ENCODE measurements at regions of chr12 and their contacts with region 1.

Region 1: GRCh38 chr12:12266873-12267741 is at the start of gene LRP6:
- DNase-seq: peak; percentile 83 to 91 (median 86)
- ATAC-seq: peak; percentile 93
- H3K4me3 ChIP-seq: peak within 1 kb of the TSS; percentile 81
- H3K27ac ChIP-seq: peak within 1 kb of the TSS; percentile 97
- H3K4me1 ChIP-seq: peaks cover 0 to 5% of the 10 kb centered on the region in 2 experiments; a peak in 3 of 5 replicates
- H3K27me3 ChIP-seq: no peaks in the 10 kb centered on the region
- CTCF ChIP-seq: no peak
- EP300 ChIP-seq: no peak
- POLR2A ChIP-seq: peak; percentile 79
- RAD21 ChIP-seq: no peak
- polyA plus RNA-seq, gene LRP6: 3.0 to 10.3 TPM

Region 2: DNA sequence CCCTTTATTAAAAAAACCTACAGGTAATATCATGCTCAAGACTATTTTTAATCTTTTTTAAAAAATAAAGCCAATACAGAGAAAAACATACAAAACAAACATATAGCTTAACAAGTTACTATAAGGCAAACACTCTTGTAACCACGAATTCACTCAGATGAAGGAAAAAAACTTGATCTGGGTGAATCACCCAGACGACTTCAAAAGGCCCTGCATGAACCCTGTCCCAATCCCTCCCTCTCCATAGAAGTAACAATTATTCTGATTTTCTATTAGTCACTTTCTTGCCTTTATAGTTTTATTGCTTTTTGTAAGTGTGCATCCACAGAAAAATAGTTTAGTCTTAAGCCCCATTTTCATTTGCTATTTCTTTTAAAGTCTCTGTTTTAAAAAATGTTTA is 72.9 kb before region 1 on chr12:
- CTCF ChIA-PET with region 1: no interaction called
- POLR2A ChIA-PET with region 1: interaction called, 3 read pairs
- in situ Hi-C with region 1: no loop called
- intact Hi-C with region 1: loop called (anchors 10 kb)
- DNase-seq: peak in 1 of 4 experiments; percentile 9
- ATAC-seq: 0 out of 3 replicates have a peak, but pooled peaks have one; percentile 17
- H3K4me3 ChIP-seq: no peak overlapping the region
- H3K27ac ChIP-seq: no peak overlapping the region
- H3K4me1 ChIP-seq: peaks cover 9 to 16% of the 10 kb centered on the region in 2 experiments; a peak in 2 of 5 replicates
- H3K27me3 ChIP-seq: no peaks in the 10 kb centered on the region
- CTCF ChIP-seq: no peak
- EP300 ChIP-seq: no peak
- POLR2A ChIP-seq: no peak
- RAD21 ChIP-seq: no peak

Measured in K562 (cell line).